ENCODE measurements at regions of chrX and their contacts with region 1.

Region 1: GRCh38 chrX:68511255-68511654 is 12.4 kb downstream of the YIPF6 start:
- DNase-seq: peak; percentile 18
- H3K4me3 ChIP-seq: no peak overlapping the region
- H3K27ac ChIP-seq: no peak overlapping the region
- H3K4me1 ChIP-seq: no peaks in the 10 kb centered on the region
- H3K27me3 ChIP-seq: no peaks in the 10 kb centered on the region
- CTCF ChIP-seq: peak; percentile 45 to 81 (median 57)
- EP300 ChIP-seq: no peak
- POLR2A ChIP-seq: no peak

Region 2: DNA sequence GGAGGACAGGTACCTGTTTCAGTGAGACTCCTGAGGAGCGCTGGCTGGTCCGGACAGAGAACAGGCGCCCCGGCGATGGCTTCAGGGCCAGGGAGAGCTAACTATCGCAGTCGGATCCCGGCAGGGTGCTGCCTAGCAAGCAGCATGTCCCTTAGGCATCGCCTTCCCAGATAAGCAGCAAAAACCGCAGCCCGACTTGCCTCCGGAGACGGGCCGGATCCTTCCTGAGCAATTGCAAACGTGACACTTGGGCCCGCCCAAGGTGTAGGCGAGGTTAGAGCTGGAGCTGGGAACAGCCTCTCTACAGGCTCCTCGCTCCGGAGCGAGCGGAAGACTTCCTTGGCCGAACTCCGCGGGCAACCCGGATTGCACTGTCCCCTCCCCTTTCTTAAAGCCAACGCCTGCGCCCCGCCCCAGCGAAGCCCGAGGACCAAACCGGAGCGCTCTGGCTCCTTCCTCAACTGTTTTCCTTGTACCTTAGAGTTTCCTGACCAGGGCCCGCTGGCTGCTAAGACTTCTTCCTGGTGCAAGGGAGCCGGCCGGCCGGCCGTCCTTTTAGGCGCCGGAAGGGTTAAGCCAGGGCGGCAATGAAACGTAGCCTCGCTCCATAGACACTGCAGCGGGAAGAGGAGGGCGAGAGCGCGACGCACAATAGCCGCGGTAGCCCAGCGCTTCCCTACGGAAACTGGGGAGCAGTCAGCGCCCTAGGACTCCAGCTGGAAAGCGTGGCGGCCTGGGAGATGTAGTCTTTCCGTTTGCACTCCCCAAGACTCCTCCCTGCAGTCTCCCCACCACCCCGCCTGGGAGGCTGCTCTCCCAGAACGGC is 77.9 kb before region 1 on chrX and contains the start of gene OPHN1:
- in situ Hi-C with region 1: no loop called
- intact Hi-C with region 1: no loop called
- DNase-seq: peak; percentile 83
- H3K4me3 ChIP-seq: peak within 1 kb of the TSS; percentile 42 to 67 (median 52)
- H3K27ac ChIP-seq: peak within 1 kb of the TSS; percentile 82 to 92 (median 89)
- H3K4me1 ChIP-seq: peaks cover 0 to 18% (median 2%) of the 10 kb centered on the region in 4 donors
- H3K27me3 ChIP-seq: no peaks in the 10 kb centered on the region
- CTCF ChIP-seq: no peak
- EP300 ChIP-seq: no peak
- POLR2A ChIP-seq: peak; percentile 48
- total RNA-seq, gene OPHN1: 2.8 to 8.7 (median 6.6) TPM

Region 3: GRCh38 chrX:68710870-68711576 is 199.8 kb after region 1 on chrX:
- in situ Hi-C with region 1: loop called in 3 of 4 experiments (anchors 25 kb)
- intact Hi-C with region 1: no loop called
- DNase-seq: no peak
- H3K4me3 ChIP-seq: no peak overlapping the region
- H3K27ac ChIP-seq: no peak overlapping the region
- H3K4me1 ChIP-seq: no peaks in the 10 kb centered on the region
- H3K27me3 ChIP-seq: no peaks in the 10 kb centered on the region
- CTCF ChIP-seq: peak; percentile 30 to 51 (median 40)
- EP300 ChIP-seq: no peak
- POLR2A ChIP-seq: no peak

Region 4: DNA sequence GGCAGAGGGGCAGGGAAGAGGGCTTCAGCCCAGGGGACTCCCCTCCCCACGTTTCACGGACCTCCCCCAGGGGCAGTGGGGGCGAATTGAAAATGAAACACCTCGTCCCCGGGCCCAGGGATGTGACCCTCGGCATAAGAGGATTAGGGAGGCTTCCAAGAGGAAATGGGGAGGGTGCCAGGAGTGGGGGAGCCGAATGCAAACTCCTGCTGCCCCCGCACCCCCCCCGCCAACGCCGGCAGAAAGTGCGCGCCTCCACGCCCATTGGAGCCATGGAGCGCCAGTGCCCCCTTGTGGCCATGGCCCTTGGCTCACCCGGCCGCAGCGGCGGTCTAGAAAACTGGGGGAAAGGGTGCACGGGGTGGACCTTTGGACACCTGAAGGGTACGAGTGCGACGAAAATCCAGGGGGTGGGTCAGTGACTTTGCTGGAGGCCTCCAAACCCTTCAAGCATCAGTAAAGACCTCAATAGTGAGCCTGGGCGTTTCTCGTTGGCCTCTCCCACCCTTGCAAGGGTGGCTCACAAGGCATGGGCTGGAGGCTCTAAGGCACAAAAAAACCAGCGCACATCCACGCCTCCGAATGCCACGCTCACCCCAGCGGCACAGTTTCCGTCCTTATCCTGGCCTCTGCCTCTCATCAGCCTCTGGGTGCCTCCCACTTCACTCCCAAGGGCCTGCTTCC is 774.8 kb after region 1 on chrX:
- in situ Hi-C with region 1: loop called in 1 of 4 experiments (anchors 25 kb)
- intact Hi-C with region 1: no loop called
- DNase-seq: peak; percentile 64
- H3K4me3 ChIP-seq: peak overlapping the region in 3 of 4 donors; percentile 20 to 48 (median 31)
- H3K27ac ChIP-seq: peak overlapping the region; percentile 22 to 56 (median 52)
- H3K4me1 ChIP-seq: peaks cover 0 to 8% (median 3%) of the 10 kb centered on the region in 4 donors
- H3K27me3 ChIP-seq: no peaks in the 10 kb centered on the region
- CTCF ChIP-seq: peak; percentile 71 to 91 (median 77)
- EP300 ChIP-seq: no peak
- POLR2A ChIP-seq: no peak